Adrenal gland (tissue), 19 donors: ENCODE measurements at regions of chr17 and their contacts with region 1.

Region 1: GRCh38 chr17:35764123-35764991 is 3.7 kb downstream of the C17orf50 start:
- DNase-seq: peak; percentile 87 to 93 (median 90)
- H3K4me3 ChIP-seq: peak overlapping the region in 2 of 4 donors; percentile 18 to 60
- H3K27ac ChIP-seq: peak overlapping the region in 2 of 5 donors; percentile 54 to 55
- H3K4me1 ChIP-seq: peaks cover 5 to 11% of the 10 kb centered on the region in 2 donors
- H3K27me3 ChIP-seq: no peaks in the 10 kb centered on the region
- CTCF ChIP-seq: peak; percentile 74 to 99 (median 91)
- POLR2A ChIP-seq: no peak

Region 2: DNA sequence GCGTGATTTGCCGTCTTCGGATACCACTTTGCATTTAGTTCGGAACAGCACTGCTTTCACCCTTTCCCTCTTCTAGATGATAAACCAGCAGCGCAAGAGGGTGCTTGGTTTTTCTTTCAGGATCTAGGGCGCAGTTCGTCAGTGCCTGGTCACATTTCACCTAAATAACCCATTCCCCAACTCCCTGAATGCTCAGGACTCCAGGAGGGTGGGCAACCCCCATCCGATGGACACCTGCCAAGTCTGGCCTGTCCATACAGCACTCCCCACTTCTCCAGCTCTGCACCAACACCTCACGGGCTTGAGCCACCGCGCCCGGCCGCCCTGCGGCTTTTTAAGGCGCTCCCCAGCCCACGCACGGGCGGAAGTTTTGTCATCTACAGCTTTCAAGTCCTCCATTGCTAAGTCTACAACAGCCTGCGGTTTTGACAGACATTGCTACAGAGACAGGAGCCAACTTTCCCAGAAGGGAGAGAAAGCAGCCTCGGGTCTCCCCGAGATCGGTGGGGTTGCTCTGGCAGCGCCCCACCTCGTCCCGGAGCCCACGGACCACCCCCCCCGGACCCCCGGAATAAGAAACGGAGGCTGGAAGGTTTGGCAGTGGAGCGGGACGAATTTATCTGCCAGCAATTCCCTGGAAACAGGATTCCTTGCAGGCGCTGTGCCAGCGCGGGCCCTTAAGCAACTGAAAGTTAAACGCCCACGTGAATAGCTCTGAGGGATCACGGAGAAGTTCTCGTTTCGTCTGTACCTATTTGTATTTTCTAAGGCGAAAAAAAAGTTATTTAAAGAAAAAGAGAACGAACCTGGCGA is 277.2 kb before region 1 on chr17:
- intact Hi-C with region 1: no loop called
- DNase-seq: peak; percentile 15 to 61 (median 31)
- H3K4me3 ChIP-seq: peak overlapping the region in 2 of 4 donors; percentile 9 to 55
- H3K27ac ChIP-seq: no peak overlapping the region
- H3K4me1 ChIP-seq: peaks cover 0 to 5% of the 10 kb centered on the region in 2 donors
- H3K27me3 ChIP-seq: peaks cover 54% of the 10 kb centered on the region
- CTCF ChIP-seq: no peak
- POLR2A ChIP-seq: no peak

Region 3: GRCh38 chr17:35808962-35809854 is 44.9 kb after region 1 on chr17 and contains the start of gene TAF15:
- intact Hi-C with region 1: loop called (anchors 2 to 5 kb)
- DNase-seq: peak; percentile 95 to 98 (median 97)
- H3K4me3 ChIP-seq: peak within 1 kb of the TSS; percentile 43 to 96 (median 88)
- H3K27ac ChIP-seq: peak within 1 kb of the TSS; percentile 86 to 97 (median 95)
- H3K4me1 ChIP-seq: peaks cover 14 to 24% of the 10 kb centered on the region in 2 donors
- H3K27me3 ChIP-seq: no peaks in the 10 kb centered on the region
- CTCF ChIP-seq: peak; percentile 36 to 84 (median 74)
- POLR2A ChIP-seq: peak; percentile 99
- total RNA-seq, gene TAF15: 27.8 to 153 (median 60.2) TPM